ENCODE measurements at regions of chr16 and their contacts with region 1.

Region 1: DNA sequence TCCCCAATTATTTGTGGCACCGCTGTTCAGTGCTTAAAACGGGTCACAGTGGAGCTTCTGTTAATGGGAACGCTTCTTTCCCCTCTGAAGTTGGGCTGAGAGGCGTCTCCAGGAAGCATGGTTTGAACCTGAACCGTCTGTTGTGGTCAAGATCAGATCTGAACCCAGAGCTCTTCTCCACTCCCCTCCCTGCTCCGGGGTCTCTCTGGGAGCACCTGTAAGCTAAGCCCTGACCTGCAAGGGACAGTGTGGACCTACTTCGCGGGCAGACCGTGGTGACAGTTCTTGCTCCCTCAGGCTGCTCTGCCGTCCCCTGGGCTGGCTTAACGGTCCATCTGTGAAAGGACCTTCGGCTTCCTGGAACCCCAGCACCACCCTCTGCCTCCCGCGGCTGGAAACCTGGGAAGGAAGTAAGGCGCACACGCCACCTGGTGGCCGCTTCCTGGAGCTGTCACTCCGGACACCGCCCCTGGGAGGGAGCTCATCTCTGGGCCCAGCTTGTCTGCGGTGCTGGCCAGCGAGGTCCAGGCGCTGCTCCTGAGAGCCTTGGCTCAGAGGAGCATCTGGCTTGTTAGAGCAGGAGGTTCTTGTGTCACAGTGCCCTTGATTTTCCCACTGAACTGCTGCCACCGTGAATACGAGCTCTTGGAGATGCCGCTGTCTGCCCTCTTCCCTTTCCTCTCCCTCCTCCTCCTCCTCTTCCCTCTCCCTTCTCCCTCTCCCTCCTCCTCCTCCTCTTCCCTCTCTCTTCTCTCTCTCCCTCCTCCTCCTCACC is 518.5 kb upstream of the EEF2KMT start:
- DNase-seq: peak; percentile 43
- H3K4me3 Mint-ChIP-seq: no peak overlapping the region
- H3K27ac Mint-ChIP-seq: no peak overlapping the region
- H3K4me1 Mint-ChIP-seq: peaks cover 3% of the 10 kb centered on the region
- H3K27me3 Mint-ChIP-seq: peaks cover 14% of the 10 kb centered on the region

Region 2: GRCh38 chr16:5235119-5235518 is 380.9 kb before region 1 on chr16:
- CTCF ChIA-PET with region 1: interaction called, 6 read pairs
- intact Hi-C with region 1: loop called (anchors 5 kb)
- DNase-seq: no peak
- H3K4me3 Mint-ChIP-seq: no peak overlapping the region
- H3K27ac Mint-ChIP-seq: no peak overlapping the region
- H3K4me1 Mint-ChIP-seq: peaks cover 7% of the 10 kb centered on the region
- H3K27me3 Mint-ChIP-seq: peaks cover 21% of the 10 kb centered on the region

Region 3: DNA sequence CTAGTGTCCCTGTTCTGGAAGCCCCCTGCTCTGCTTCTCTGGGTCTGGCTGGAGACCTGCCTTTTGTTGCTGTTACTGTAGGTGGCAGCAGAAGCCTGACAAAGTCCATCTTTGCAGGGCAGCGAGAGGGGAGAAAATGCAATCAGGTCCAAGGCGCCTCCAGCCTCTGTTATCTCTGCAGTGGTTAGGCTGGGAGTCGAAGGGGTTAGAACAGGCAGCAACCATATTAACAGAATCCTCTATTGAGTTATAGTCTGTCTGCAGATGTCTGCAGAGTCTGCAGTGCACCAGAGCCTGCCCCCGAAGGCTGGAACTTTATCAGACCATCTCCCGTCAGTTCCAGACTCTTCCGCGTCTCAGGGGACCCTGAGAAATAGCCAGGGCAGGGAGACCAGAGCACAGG is 113.6 kb before region 1 on chr16:
- CTCF ChIA-PET with region 1: interaction called, 4 read pairs
- intact Hi-C with region 1: loop called (anchors 5 kb)
- DNase-seq: peak; percentile 6
- H3K4me3 Mint-ChIP-seq: no peak overlapping the region
- H3K27ac Mint-ChIP-seq: no peak overlapping the region
- H3K4me1 Mint-ChIP-seq: no peaks in the 10 kb centered on the region
- H3K27me3 Mint-ChIP-seq: no peaks in the 10 kb centered on the region

Region 4: GRCh38 chr16:5633845-5634440 is 17.9 kb after region 1 on chr16:
- CTCF ChIA-PET with region 1: interaction called, 10 read pairs
- intact Hi-C with region 1: no loop called
- DNase-seq: no peak
- H3K4me3 Mint-ChIP-seq: no peak overlapping the region
- H3K27ac Mint-ChIP-seq: no peak overlapping the region
- H3K4me1 Mint-ChIP-seq: no peaks in the 10 kb centered on the region
- H3K27me3 Mint-ChIP-seq: no peaks in the 10 kb centered on the region

Measured in activated naive CD4-positive, alpha-beta T cell treated with anti-CD3 and anti-CD28 coated beads for 36 hours (primary cell).